B cell (primary cell): ENCODE measurements at regions of chr9 and their contacts with region 1.

Region 1: DNA sequence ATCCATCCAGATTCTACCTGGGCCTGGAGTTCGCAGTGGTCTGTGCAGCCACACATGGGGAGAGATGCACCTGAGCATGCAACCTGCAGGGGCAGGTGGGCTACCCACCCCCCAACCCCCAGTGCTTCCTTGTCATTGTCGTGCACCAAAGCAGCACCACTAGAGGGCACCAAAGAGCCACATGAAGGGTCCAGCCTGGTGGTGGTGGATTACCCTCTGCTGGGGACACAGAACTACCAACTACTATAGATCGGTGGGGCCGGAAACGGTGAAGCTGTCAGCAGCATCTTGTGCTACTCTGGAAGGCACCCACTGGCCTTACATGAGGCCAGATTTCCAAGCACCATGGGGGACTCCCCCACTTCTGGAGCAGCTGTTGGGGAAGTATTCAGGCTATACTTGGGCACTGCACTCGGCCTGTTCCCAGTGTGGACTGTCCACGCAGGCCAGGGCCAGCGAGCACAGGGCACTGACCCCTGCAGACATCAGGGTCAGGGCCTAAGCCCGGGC is 60.2 kb upstream of the TBC1D2 start:
- DNase-seq: peak; percentile 85
- ATAC-seq: peak; percentile 92
- H3K4me3 ChIP-seq: no peak overlapping the region
- H3K4me3 Mint-ChIP-seq: no peak overlapping the region
- H3K27ac ChIP-seq: no peak overlapping the region
- H3K27ac Mint-ChIP-seq: no peak overlapping the region
- H3K4me1 ChIP-seq: no peaks in the 10 kb centered on the region
- H3K4me1 Mint-ChIP-seq: peaks cover 2% of the 10 kb centered on the region
- H3K27me3 ChIP-seq: peaks cover 0 to 4% (median 1%) of the 10 kb centered on the region in 4 experiments
- H3K27me3 Mint-ChIP-seq: no peaks in the 10 kb centered on the region
- CTCF ChIP-seq: peak; percentile 88

Region 2: DNA sequence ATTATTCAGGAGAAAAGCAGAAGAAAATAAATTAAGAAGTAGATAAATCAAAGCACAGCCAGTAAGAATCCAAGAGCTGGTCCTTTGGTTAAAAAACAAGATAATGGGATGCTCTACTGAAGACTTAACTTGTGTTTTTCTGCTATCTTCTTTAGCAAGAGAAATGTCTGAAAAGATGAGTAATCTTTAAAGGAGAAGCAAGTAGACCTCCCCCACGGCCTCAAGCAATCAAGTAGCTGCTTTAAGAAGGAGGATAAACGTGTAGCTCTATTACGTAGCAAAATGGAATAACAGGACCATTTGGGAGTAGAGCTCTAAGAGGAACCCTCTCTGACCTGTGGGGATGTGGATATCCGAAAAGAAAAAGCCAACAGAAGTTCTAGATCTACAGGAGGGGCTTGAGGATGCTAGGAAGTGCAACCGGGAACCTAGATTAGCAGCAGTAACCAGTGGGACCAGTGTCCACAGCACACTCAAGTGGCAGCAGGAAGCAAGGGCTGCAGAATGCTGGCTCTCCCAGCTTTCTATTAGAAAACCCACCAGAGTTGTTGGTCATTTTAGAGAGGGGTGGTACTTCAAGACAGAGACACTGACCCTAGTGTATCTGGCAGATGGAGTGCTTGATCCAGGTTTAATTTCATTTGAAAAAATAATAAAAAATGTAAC is 207.8 kb after region 1 on chr9:
- CTCF ChIA-PET with region 1: no interaction called
- POLR2A ChIA-PET with region 1: no interaction called
- intact Hi-C with region 1: loop called (anchors 10 kb)
- DNase-seq: no peak
- ATAC-seq: no peak
- H3K4me3 ChIP-seq: no peak overlapping the region
- H3K4me3 Mint-ChIP-seq: no peak overlapping the region
- H3K27ac ChIP-seq: no peak overlapping the region
- H3K27ac Mint-ChIP-seq: no peak overlapping the region
- H3K4me1 ChIP-seq: no peaks in the 10 kb centered on the region
- H3K4me1 Mint-ChIP-seq: no peaks in the 10 kb centered on the region
- H3K27me3 ChIP-seq: peaks cover 0 to 12% (median 5%) of the 10 kb centered on the region in 4 experiments
- H3K27me3 Mint-ChIP-seq: peaks cover 40% of the 10 kb centered on the region
- CTCF ChIP-seq: no peak

Region 3: DNA sequence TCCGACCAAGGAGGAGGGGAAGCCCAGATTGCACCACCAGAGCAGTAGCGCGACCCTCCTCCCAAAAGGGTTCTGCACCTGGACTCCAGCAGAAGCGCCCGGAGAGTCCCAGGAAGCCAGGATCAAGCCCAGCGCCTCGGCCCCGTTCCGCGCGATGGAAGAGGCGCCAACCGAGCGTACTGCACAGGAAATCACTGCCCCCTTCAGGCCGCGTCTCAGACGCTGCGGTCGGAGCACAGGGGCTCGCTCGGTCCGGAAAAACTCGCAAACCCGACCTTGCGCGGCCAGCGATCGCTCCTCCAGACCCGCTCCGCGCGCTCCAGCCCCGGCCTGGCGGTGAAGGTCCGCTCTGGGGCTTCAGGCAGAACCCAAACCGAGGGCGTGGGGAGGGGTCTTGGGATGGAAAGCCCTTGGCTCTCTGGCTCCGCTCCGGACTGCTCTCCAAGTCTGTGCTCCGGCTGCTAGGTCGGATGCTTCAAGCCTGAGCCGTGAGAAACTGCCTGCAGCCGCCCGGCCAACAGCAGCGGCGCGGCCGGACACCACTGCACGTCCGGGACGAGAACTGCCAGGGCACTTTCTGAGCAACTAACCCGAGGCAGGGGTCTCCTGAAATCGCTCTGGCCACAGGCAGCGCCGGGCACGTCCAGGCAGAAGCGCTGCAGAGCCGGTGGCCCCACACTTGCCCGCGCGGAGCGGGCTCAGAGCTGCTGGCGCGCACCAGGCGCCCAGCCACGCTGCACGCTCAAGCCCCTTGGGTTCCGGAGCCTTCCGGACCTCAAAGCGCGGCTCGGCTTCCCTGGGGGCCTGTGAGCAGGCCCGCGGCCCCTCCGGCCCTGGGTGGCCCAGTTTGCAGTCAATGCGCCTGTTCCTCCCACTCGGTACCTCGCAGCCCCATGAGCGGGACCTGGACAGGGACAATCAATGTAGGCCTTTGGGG is 391.8 kb after region 1 on chr9:
- CTCF ChIA-PET with region 1: no interaction called
- POLR2A ChIA-PET with region 1: no interaction called
- intact Hi-C with region 1: loop called (anchors 5 kb)
- DNase-seq: no peak
- ATAC-seq: no peak
- H3K4me3 ChIP-seq: no peak overlapping the region
- H3K4me3 Mint-ChIP-seq: no peak overlapping the region
- H3K27ac ChIP-seq: no peak overlapping the region
- H3K27ac Mint-ChIP-seq: no peak overlapping the region
- H3K4me1 ChIP-seq: peaks cover 9 to 13% of the 10 kb centered on the region in 2 donors
- H3K4me1 Mint-ChIP-seq: peaks cover 7% of the 10 kb centered on the region
- H3K27me3 ChIP-seq: peaks cover 0 to 39% (median 10%) of the 10 kb centered on the region in 4 experiments
- H3K27me3 Mint-ChIP-seq: peaks cover 60% of the 10 kb centered on the region
- CTCF ChIP-seq: no peak

Region 4: DNA sequence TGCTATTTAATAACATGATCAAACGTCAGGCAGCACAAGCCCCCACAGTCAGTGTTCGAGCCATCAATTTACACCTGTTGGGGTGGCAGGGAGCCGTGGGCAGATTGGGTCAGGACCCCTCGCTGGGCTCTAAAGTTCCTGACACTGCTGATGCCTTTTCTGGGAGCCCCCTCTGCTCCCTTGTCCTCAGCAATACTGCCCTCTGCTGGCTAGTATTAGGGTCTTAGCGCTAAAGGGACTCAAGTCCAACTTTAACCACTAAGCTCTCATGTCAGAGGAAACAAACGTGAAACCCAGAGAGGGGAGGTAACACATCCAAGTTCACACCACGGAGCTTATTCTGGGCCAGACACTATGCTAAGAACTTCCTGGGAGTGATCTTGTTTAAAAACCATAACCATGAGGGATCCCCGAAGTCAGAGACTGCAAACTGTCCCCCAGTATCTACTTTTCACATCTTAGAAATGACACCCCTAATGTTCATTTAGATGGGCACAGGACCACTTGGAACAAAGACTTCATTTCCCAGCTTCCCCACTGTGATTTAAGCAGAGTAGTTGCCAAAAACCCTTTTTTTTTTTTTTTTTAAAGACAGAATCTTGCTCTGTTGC is 460.3 kb after region 1 on chr9:
- CTCF ChIA-PET with region 1: interaction called, 123 read pairs
- POLR2A ChIA-PET with region 1: no interaction called
- intact Hi-C with region 1: no loop called
- DNase-seq: peak; percentile 69
- ATAC-seq: peak; percentile 64
- H3K4me3 ChIP-seq: no peak overlapping the region
- H3K4me3 Mint-ChIP-seq: no peak overlapping the region
- H3K27ac ChIP-seq: no peak overlapping the region
- H3K27ac Mint-ChIP-seq: no peak overlapping the region
- H3K4me1 ChIP-seq: no peaks in the 10 kb centered on the region
- H3K4me1 Mint-ChIP-seq: no peaks in the 10 kb centered on the region
- H3K27me3 ChIP-seq: no peaks in the 10 kb centered on the region
- H3K27me3 Mint-ChIP-seq: no peaks in the 10 kb centered on the region
- CTCF ChIP-seq: peak; percentile 76

Region 5: DNA sequence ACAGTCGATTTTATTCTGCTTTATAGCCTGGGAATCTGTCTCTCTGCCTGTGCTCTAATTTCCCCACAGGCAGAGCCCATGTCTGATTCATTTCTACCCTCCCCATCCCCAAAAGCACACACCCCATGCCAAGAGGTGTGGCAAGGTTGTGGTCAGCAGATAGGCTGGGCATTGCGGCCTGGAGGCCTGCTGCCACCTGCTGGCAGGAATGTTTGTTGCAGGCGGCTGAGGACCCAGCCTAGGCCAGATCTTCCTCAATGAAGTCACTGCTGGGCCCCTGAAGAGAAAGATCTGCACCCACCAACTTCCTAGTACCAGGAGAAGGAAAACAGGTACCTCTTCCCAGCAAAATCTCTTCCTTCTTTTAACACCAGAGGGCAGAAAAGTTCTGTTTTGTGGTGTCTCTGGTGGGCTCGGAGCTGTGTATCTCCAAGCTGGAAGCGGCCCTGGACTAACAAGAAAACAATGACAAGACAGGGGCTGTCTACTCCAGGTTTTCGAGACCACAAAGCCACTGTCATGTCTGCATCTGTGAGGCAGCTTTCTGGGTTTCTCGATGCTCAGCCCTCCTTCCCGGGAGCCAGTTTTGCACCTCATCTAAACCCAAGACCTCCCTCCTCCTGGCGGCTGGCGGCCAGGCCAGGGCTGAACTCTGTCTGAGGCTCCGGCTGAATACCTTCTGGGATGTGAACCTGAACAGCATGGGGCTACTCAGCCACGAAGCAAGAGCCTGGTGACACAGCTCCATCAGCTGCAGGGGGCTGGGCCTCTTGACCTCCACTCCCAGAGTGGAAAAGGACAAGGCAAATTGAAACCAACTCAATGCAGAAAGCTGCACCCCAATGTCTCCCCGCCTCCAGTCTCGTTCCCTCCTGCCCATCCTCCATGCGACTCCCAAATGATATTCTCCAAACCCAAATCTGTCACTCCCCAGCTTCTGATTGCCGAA is 475.8 kb after region 1 on chr9:
- CTCF ChIA-PET with region 1: interaction called, 16 read pairs
- POLR2A ChIA-PET with region 1: no interaction called
- intact Hi-C with region 1: loop called (anchors 1 kb)
- DNase-seq: peak; percentile 69
- ATAC-seq: peak; percentile 71
- H3K4me3 ChIP-seq: no peak overlapping the region
- H3K4me3 Mint-ChIP-seq: no peak overlapping the region
- H3K27ac ChIP-seq: no peak overlapping the region
- H3K27ac Mint-ChIP-seq: no peak overlapping the region
- H3K4me1 ChIP-seq: peaks cover 4 to 7% of the 10 kb centered on the region in 2 donors
- H3K4me1 Mint-ChIP-seq: peaks cover 24% of the 10 kb centered on the region
- H3K27me3 ChIP-seq: no peaks in the 10 kb centered on the region
- H3K27me3 Mint-ChIP-seq: no peaks in the 10 kb centered on the region
- CTCF ChIP-seq: peak; percentile 95

Region 6: DNA sequence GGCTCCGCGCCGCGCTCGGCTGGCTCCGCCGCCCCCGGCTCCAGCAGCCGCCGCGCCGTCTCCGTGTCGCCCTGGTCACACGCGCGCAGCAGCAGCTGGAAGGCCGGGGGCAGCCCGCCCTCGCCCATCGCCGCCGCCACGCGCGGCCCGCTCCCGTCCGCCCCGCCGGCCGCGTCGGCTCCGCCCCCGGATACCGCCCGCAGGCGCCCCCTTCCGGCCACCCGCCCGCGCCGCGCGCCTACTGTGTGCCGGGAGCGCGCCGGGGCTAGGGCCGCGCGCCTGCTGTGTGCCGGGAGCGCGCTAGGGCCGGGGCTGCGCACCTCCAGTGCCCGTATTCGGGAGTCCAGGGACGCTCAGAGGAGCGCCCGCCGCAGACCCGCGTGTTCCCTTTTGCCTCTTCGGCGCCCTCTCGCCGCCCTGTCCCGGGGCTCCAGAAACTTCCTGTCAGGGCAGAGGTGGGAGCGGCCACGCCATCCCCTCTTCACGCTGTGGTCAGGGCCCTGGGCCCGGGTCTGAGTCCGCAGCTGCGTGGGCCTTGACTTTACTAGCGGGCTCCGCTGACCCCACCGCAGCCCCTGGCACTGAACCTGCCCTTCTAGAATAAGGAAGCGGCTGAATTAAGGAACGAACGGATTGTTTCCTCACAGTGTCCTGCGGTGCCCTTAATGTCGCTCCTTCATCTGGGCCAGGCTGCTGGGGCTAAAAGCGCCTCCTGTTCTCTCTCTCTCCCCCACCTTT is 480.9 kb after region 1 on chr9 and contains the start of gene ANKS6:
- CTCF ChIA-PET with region 1: interaction called, 16 read pairs
- POLR2A ChIA-PET with region 1: no interaction called
- intact Hi-C with region 1: loop called (anchors 1 kb)
- DNase-seq: peak; percentile 88
- ATAC-seq: peak; percentile 93
- H3K4me3 ChIP-seq: peak within 1 kb of the TSS; percentile 35 to 93 (median 78)
- H3K4me3 Mint-ChIP-seq: peak within 1 kb of the TSS; percentile 88
- H3K27ac ChIP-seq: peak within 1 kb of the TSS; percentile 38 to 68
- H3K27ac Mint-ChIP-seq: peak within 1 kb of the TSS; percentile 68
- H3K4me1 ChIP-seq: peaks cover 10 to 13% of the 10 kb centered on the region in 2 donors
- H3K4me1 Mint-ChIP-seq: peaks cover 23% of the 10 kb centered on the region
- H3K27me3 ChIP-seq: no peaks in the 10 kb centered on the region
- H3K27me3 Mint-ChIP-seq: no peaks in the 10 kb centered on the region
- CTCF ChIP-seq: peak; percentile 45
- total RNA-seq, gene ANKS6: 15.1 and 16.1 TPM in 2 replicates